ENCODE measurements at regions of chr10 and their contacts with region 1.

Region 1: DNA sequence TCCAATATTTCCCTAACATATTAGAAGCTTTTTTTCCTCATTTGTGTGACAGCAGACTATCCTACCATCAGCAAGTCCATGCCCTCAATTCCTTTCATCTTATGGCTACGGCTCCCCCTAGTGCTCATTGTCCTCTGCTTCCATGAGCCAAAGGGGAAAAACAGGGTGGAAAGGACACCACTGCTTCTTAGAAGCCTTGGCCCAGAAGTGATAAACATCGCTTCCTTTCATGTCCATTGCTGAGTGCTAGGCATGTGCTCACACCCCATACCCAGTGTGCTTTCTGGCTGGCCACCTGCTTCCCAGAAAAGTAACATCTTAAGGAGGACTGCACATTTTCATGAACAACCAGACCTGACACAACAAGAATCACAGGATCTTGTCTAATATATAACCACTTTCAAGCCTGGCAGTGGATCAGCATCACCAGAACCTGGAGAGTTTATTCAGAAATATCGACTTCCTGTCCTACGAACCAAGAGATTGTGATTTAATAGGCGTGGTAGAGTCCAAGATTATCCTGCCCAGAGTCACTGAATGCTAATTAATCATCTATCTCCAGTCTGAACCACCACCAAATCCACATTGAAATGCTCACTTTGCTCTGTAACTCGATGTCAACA is 650.5 kb upstream of the SORCS1 start:
- DNase-seq: peak; percentile 34
- ATAC-seq: peak; percentile 60 to 82

Region 2: DNA sequence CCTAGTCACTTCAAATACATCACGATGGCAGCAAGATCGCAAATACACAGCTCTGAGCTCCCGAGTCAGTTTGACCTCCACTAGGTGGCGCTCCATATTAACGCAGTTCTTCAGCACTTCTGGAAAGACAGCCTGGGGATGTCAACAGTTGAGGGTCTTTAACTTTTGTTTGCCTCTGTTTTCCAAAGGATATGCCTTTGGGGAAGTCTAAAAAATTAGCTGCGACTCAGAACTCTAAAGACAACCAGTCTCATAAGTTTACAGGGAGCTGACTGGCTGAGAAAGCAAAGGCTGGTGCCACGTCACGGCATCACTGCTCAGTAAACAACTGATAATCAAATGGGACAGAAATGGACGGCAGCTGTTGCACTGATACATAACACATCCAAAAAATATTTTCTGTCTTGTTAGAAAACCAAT is 1109.3 kb before region 1 on chr10:
- intact Hi-C with region 1: loop called in 1 of 2 experiments (anchors 5 kb)
- DNase-seq: peak; percentile 63
- ATAC-seq: peak; percentile 68 to 70

Region 3: DNA sequence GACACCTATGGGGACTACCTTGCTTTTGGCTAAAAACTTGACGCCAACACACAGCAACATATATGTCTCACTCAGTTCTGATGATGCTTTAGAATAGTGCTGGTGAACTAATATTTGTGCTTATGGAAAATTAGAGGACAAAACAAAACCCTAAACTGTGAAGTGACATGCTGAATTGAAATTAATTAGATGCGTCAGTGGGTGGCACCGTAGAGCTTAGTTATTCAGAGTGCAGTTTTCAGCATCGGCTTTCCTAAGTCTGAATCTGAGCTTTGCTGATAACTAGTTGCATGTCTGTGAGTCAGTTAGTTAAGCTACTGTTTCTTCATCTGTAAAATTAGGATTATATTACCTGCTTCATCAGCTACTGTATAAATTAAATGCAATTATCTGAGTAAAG is 405.5 kb before region 1 on chr10:
- intact Hi-C with region 1: loop called (anchors 2 to 10 kb)
- DNase-seq: no peak
- ATAC-seq: no peak

Region 4: DNA sequence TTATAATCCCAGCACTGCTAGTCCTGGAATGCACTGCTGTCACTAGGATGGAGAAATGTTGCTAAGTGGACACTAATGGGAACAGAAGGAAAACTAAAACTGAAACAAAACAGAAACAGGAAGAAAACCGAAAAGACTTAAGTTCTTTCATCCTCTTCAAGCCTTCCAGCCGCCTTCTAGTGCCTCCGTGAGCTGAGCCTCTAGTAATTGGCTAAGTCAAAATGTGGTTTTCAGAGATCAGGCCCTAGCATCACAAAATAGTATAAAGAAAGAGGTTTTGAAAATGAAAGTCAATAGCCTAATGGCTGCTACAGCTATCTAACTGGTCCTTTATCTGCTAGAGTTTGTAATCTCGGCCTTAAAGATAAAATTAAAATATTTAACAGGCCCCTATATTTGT is 396.6 kb before region 1 on chr10:
- intact Hi-C with region 1: loop called in 1 of 2 experiments (anchors 10 kb)
- DNase-seq: no peak
- ATAC-seq: no peak

Region 5: DNA sequence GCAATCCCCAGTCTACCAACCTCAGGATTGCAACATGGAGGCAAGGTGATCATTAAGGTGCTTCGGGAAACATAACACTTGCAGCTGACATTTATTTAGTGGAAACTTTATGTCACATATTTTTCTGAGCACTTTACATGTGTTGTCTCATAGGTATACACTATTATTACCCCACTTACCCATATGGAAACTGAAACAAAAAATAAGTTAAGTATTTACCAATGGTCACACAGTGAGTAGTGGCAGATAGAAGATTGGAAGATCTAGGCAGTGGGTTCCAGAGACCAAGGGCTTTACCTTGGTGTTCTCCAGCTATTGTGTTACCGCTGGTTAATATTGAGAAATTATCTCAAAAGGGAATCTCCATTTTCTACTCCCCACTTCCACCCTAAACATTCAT is 628.7 kb after region 1 on chr10:
- intact Hi-C with region 1: no loop called
- DNase-seq: no peak
- ATAC-seq: no peak